ENCODE measurements at regions of chr17 and their contacts with region 1.

Region 1: DNA sequence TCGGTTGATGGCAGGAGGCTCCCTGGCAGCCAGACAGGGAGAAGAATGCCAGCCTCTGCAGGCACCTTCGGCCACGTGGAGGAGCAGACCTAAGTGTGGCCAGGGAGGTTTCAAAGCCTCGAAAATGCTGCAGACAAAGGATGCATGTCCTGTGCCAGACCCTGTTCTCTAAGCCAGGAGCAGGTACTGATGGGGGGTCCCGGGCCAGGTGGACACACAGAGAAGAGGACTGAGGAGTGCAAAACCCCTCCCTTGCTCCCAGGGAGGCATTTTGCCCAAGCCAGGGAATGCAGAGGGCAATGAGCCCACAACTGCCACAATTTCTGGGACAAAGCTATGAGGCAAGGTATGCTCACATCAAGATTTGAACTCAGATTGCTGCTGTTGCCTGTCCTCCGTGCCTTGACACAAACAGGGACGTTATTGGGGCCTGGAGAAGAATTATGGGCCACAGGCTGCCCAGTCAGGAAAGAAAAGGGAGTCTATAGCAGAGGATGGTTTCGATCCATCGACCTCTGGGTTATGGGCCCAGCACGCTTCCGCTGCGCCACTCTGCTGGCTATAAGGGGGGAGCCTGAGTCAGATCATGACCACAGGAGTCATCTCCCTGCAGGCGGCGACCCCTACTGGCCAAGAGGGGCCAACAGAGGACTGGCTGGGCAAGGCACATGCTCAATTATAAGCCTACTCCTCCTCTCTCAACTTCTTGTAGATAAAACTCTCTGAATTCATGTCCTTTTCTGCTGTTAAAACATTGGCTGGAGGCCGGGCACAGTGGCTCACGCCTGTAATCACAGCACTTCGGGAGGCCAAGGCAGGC is 25.1 kb upstream of the FOXK2 start:
- DNase-seq: peak; percentile 90 to 92
- H3K4me3 ChIP-seq: no peak overlapping the region
- H3K27ac ChIP-seq: peak overlapping the region; percentile 28 to 91
- H3K4me1 ChIP-seq: peaks cover 4 to 5% of the 10 kb centered on the region in 2 donors
- H3K27me3 ChIP-seq: no peaks in the 10 kb centered on the region
- CTCF ChIP-seq: peak; percentile 78 to 96 (median 87)
- POLR2A ChIP-seq: no peak

Region 2: GRCh38 chr17:82440991-82441627 is 53.3 kb before region 1 on chr17:
- intact Hi-C with region 1: no loop called
- DNase-seq: no peak
- H3K4me3 ChIP-seq: no peak overlapping the region
- H3K27ac ChIP-seq: no peak overlapping the region
- H3K4me1 ChIP-seq: peaks cover 0 to 4% of the 10 kb centered on the region in 2 donors
- H3K27me3 ChIP-seq: no peaks in the 10 kb centered on the region
- CTCF ChIP-seq: no peak
- POLR2A ChIP-seq: no peak

Region 3: DNA sequence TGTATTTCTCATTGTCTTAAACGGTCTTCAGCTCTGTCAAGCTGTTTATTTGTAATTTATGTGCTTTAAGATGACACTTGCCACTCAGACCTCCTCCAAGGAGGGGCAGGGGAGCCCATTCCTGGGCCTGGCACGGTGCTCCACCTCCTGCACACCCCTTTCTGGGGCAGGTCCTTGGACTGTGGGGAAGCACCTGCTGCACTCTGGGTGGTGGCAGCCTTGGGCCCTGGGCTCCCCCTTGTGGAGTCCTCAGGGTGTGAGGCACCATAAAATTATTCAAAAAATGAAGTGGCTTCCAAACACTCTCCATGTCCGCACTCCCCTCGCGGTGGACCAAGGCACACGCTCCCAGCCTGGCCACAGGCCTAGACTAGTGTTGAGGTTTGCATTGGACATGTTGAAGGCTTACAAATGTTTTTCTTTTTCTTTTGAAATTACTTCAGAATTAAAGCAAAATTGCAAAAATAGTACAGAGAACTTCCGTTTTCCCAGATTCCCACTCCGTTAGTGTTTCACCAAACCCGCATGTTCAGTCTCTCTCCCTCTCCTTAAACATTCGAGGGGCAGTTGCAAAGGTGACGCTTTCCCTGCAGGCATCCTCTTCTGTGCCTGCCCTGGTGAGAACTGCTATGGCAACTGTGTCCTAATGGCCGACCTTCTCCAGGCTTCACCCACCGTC is 57.5 kb after region 1 on chr17:
- intact Hi-C with region 1: loop called (anchors 10 kb)
- DNase-seq: peak; percentile 77 to 78
- H3K4me3 ChIP-seq: no peak overlapping the region
- H3K27ac ChIP-seq: peak overlapping the region; percentile 66 to 86
- H3K4me1 ChIP-seq: peaks cover 0 to 7% of the 10 kb centered on the region in 2 donors
- H3K27me3 ChIP-seq: no peaks in the 10 kb centered on the region
- CTCF ChIP-seq: peak; percentile 78 to 83 (median 80)
- POLR2A ChIP-seq: no peak

Region 4: DNA sequence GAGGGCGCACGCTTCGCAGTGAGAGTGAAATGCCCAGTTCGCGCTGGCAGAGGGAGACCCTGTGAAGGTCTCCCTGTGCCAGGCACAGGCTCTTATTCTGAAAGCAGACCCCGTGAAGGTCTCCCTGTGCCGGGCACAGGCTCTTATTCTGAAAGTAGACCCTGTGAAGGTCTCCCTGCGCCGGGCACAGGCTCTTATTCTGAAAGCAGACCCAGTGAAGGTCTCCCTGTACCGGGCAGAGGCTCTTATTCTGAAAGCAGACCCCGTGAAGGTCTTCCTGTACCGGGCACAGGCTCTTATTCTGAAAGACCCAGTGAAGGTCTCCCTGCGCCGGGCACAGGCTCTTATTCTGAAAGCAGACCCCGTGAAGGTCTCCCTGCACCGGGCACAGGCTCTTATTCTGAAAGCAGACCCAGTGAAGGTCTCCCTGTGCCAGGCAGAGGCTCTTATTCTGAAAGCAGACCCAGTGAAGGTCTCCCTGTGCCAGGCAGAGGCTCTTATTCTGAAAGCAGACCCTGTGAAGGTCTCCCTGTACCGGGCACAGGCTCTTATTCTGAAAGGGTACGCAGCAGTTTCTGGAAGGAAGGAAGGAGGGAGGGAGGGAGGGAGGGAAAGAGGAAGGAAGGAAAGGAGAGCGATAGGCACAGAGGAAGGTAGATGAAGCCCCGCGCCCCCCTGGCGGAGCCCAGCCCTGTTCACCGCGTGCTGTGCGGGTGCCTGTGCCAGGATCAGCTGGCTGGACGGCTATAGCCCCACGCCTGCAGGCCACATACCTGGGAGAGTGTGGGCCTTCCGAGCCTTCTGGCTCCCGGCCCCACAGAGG is 98.5 kb after region 1 on chr17:
- intact Hi-C with region 1: no loop called
- DNase-seq: peak; percentile 82 to 90
- H3K4me3 ChIP-seq: peak overlapping the region; percentile 47 to 62
- H3K27ac ChIP-seq: peak overlapping the region; percentile 89 to 90
- H3K4me1 ChIP-seq: no peaks in the 10 kb centered on the region
- H3K27me3 ChIP-seq: no peaks in the 10 kb centered on the region
- CTCF ChIP-seq: no peak
- POLR2A ChIP-seq: no peak